IMR-90 (cell line): ENCODE measurements at regions of chr3 and their contacts with region 1.

Region 1: GRCh38 chr3:30693470-30694120 is 87.2 kb downstream of the TGFBR2 start:
- DNase-seq: peak; percentile 77
- ATAC-seq: peak; percentile 80
- H3K4me3 ChIP-seq: no peak overlapping the region
- H3K27ac ChIP-seq: no peak overlapping the region
- H3K4me1 ChIP-seq: peaks cover 7% of the 10 kb centered on the region
- H3K27me3 ChIP-seq: no peaks in the 10 kb centered on the region
- CTCF ChIP-seq: peak; percentile 92
- POLR2A ChIP-seq: peak; percentile 49; the same call in 1 of the 2 replicates
- RAD21 ChIP-seq: peak; percentile 99

Region 2: GRCh38 chr3:30035935-30036567 is 657.5 kb before region 1 on chr3:
- CTCF ChIA-PET with region 1: no interaction called
- POLR2A ChIA-PET with region 1: no interaction called
- dilution Hi-C with region 1: no loop called
- in situ Hi-C with region 1: loop called (anchors 10 kb)
- intact Hi-C with region 1: no loop called
- DNase-seq: no peak
- ATAC-seq: no peak
- H3K4me3 ChIP-seq: no peak overlapping the region
- H3K27ac ChIP-seq: no peak overlapping the region
- H3K4me1 ChIP-seq: no peaks in the 10 kb centered on the region
- H3K27me3 ChIP-seq: peaks cover 3% of the 10 kb centered on the region; the same call in 1 of the 2 replicates
- CTCF ChIP-seq: no peak
- POLR2A ChIP-seq: no peak
- RAD21 ChIP-seq: no peak

Region 3: GRCh38 chr3:30102356-30102755 is 591.2 kb before region 1 on chr3:
- CTCF ChIA-PET with region 1: interaction called, 3 read pairs
- POLR2A ChIA-PET with region 1: no interaction called
- dilution Hi-C with region 1: no loop called
- in situ Hi-C with region 1: loop called (anchors 5 kb)
- intact Hi-C with region 1: loop called (anchors 1 kb)
- DNase-seq: no peak
- ATAC-seq: no peak
- H3K4me3 ChIP-seq: no peak overlapping the region
- H3K27ac ChIP-seq: no peak overlapping the region
- H3K4me1 ChIP-seq: peaks cover 4% of the 10 kb centered on the region
- H3K27me3 ChIP-seq: no peaks in the 10 kb centered on the region
- CTCF ChIP-seq: no peak
- POLR2A ChIP-seq: no peak
- RAD21 ChIP-seq: no peak

Region 4: GRCh38 chr3:30112902-30113484 is 580.6 kb before region 1 on chr3:
- CTCF ChIA-PET with region 1: interaction called, 4 read pairs
- POLR2A ChIA-PET with region 1: no interaction called
- dilution Hi-C with region 1: no loop called
- in situ Hi-C with region 1: loop called (anchors 5 kb)
- intact Hi-C with region 1: loop called (anchors 1 kb)
- DNase-seq: peak; percentile 59
- ATAC-seq: peak; percentile 78
- H3K4me3 ChIP-seq: no peak overlapping the region
- H3K27ac ChIP-seq: no peak overlapping the region
- H3K4me1 ChIP-seq: no peaks in the 10 kb centered on the region
- H3K27me3 ChIP-seq: no peaks in the 10 kb centered on the region; the same call in none of the 2 replicates
- CTCF ChIP-seq: peak; percentile 72
- POLR2A ChIP-seq: no peak
- RAD21 ChIP-seq: peak; percentile 82

Region 5: DNA sequence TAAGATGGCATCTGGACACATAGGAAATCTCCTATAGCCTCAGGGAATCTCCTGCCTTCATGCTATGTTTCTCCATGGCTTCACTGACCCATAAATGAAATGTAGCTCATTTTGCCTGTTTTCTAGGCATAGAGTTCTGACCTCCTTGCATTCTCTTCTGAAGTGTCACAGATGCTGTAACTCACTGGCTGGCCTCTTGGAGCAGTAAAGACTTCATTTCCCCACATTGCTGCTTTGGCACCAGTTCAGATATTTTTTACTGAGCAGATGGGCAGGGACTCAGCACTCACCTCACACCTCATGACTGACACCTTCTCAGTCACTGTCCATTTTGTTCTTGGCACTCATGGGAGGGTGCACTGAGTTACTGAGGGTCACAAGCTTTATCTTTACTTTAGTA is 373.9 kb before region 1 on chr3:
- CTCF ChIA-PET with region 1: interaction called, 4 read pairs
- POLR2A ChIA-PET with region 1: no interaction called
- dilution Hi-C with region 1: no loop called
- in situ Hi-C with region 1: no loop called
- intact Hi-C with region 1: loop called (anchors 5 kb)
- DNase-seq: peak; percentile 57
- ATAC-seq: peak; percentile 63
- H3K4me3 ChIP-seq: no peak overlapping the region
- H3K27ac ChIP-seq: no peak overlapping the region
- H3K4me1 ChIP-seq: peaks cover 7% of the 10 kb centered on the region; the same call in 1 of the 2 replicates
- H3K27me3 ChIP-seq: no peaks in the 10 kb centered on the region
- CTCF ChIP-seq: peak; percentile 47
- POLR2A ChIP-seq: no peak
- RAD21 ChIP-seq: peak; percentile 60

Region 6: DNA sequence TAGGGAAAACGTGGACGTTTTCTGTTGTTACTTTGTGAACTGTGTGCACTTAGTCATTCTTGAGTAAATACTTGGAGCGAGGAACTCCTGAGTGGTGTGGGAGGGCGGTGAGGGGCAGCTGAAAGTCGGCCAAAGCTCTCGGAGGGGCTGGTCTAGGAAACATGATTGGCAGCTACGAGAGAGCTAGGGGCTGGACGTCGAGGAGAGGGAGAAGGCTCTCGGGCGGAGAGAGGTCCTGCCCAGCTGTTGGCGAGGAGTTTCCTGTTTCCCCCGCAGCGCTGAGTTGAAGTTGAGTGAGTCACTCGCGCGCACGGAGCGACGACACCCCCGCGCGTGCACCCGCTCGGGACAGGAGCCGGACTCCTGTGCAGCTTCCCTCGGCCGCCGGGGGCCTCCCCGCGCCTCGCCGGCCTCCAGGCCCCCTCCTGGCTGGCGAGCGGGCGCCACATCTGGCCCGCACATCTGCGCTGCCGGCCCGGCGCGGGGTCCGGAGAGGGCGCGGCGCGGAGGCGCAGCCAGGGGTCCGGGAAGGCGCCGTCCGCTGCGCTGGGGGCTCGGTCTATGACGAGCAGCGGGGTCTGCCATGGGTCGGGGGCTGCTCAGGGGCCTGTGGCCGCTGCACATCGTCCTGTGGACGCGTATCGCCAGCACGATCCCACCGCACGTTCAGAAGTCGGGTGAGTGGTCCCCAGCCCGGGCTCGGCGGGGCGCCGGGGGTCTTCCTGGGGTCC is 87.1 kb before region 1 on chr3 and contains the start of gene TGFBR2:
- CTCF ChIA-PET with region 1: interaction called, 6 read pairs
- POLR2A ChIA-PET with region 1: interaction called, 5 read pairs
- dilution Hi-C with region 1: no loop called
- in situ Hi-C with region 1: no loop called
- intact Hi-C with region 1: loop called (anchors 2 kb)
- DNase-seq: peak; percentile 99
- ATAC-seq: peak; percentile 95
- H3K4me3 ChIP-seq: peak within 1 kb of the TSS; percentile 84
- H3K27ac ChIP-seq: peak within 1 kb of the TSS; percentile 96
- H3K4me1 ChIP-seq: peaks cover 6% of the 10 kb centered on the region
- H3K27me3 ChIP-seq: no peaks in the 10 kb centered on the region
- CTCF ChIP-seq: peak; percentile 39
- POLR2A ChIP-seq: peak; percentile 41; the same call in 1 of the 2 replicates
- RAD21 ChIP-seq: peak; percentile 50
- total RNA-seq, gene TGFBR2: 87.5 and 89.7 TPM in 2 replicates

Region 7: GRCh38 chr3:31399271-31399670 is 705.7 kb after region 1 on chr3:
- CTCF ChIA-PET with region 1: no interaction called
- POLR2A ChIA-PET with region 1: no interaction called
- dilution Hi-C with region 1: no loop called
- in situ Hi-C with region 1: no loop called
- intact Hi-C with region 1: no loop called
- DNase-seq: no peak
- ATAC-seq: no peak
- H3K4me3 ChIP-seq: no peak overlapping the region
- H3K27ac ChIP-seq: no peak overlapping the region
- H3K4me1 ChIP-seq: no peaks in the 10 kb centered on the region
- H3K27me3 ChIP-seq: no peaks in the 10 kb centered on the region
- CTCF ChIP-seq: no peak
- POLR2A ChIP-seq: no peak
- RAD21 ChIP-seq: no peak